Activated CD4-positive, alpha-beta memory T cell treated with anti-CD3 and anti-CD28 coated beads, Interleukin-2, amount 10 ng/mL, durations not matched to agents 7 days and 5 days (primary cell): ENCODE measurements at regions of chr6 and their contacts with region 1.

Region 1: GRCh38 chr6:143842902-143843676 is at the start of gene LTV1:
- DNase-seq: peak; percentile 94
- H3K4me3 Mint-ChIP-seq: peak within 1 kb of the TSS; percentile 90
- H3K27ac Mint-ChIP-seq: peak within 1 kb of the TSS; percentile 91
- H3K4me1 Mint-ChIP-seq: peaks cover 20% of the 10 kb centered on the region
- H3K27me3 Mint-ChIP-seq: no peaks in the 10 kb centered on the region
- total RNA-seq, gene LTV1: 18.3 to 18.8 TPM

Region 2: DNA sequence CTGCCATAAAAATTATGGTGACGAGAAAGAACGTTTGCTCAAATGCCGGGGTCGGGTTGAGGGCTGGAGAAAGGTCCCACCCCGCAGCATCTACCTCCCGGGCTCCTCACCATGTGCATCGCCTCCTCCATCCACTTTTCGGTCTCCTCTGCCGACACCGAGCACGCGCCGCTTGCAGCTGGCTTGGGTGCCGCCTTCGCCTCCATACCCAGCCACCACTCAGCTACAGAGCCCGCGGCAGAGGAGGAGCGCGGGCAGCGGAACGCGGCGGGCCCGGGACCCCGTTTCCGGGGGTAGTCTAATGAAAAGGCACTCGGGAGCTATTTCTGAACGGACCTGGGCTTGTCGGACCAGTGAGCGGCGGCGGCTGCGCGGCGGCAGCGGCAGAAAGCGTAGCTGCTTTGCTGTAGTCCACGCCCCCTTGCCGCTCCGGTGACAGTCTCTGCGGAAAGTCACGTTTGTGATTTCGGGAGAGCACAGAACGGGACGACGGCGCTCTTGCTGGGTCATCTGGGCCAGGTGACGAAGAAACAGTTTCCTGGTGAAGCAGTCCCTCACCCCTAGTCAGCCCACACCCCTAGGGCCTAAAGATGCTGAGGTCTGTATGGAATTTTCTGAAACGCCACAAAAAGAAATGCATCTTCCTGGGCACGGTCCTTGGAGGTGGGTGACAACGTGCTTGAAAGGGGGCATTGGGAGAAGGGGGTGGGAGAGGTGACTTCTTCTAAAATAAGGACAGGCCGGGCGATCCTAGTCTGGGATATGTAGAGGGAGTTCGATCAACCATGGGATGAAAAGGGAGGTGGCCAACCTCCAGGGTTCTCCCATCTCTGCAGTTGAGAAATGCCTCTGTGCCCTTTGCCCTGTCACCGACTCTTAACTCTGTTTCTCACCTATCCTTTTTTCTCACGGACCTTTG is 392.4 kb before region 1 on chr6 and contains the starts of genes ADAT2 and PEX3:
- CTCF ChIA-PET with region 1: interaction called, 4 read pairs
- POLR2A ChIA-PET with region 1: interaction called, 20 read pairs
- DNase-seq: peak; percentile 95
- H3K4me3 Mint-ChIP-seq: peak within 1 kb of the TSS; percentile 92
- H3K27ac Mint-ChIP-seq: peak within 1 kb of the TSS; percentile 92
- H3K4me1 Mint-ChIP-seq: peaks cover 40% of the 10 kb centered on the region
- H3K27me3 Mint-ChIP-seq: no peaks in the 10 kb centered on the region
- total RNA-seq, gene ADAT2: 19.4 to 20.1 TPM
- total RNA-seq, gene PEX3: 14.1 to 15.9 TPM

Region 3: DNA sequence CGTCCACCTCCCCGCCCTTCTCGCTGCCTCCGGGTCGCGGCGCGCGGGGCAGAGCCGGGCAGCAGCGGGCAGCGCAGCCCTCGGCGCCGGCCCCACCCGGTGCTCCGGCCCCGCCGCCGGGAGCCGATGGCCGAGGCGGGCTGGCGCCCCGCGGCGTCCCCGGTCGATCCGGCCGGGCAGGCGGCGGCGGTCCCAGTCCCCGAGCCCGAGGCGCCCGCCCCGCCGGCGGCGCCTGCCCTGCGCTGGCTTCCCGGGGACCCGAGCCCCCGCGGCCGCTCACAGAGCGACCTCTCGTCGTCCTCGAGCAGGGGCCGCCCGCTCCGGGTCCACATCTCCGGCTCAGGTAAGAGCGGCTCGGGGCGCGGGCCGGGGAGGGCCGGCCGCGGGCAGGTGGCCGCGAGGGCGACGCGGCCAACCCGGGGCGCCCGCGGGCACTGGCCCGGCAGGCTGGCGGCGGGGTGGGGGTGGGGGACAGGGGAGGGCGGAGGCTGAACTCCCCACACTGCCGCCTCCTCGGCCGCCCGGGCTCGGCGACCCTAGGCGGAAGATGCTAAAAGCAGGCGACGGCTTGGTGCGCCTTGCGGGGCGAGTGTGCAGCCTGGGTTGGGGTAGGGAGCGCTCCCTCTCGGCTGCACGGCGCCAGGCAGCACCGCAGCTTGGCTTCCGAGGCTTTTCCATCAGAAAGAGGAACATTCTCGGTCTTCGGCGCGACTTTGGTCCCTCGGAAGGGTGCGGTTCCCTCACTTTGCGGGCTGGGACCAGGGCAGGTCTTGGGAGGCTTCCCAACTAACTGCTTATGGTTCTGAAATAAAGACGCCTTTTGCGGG is 306.0 kb before region 1 on chr6:
- CTCF ChIA-PET with region 1: interaction called, 6 read pairs
- POLR2A ChIA-PET with region 1: interaction called, 13 read pairs
- DNase-seq: peak; percentile 71
- H3K4me3 Mint-ChIP-seq: peak overlapping the region; percentile 77
- H3K27ac Mint-ChIP-seq: peak overlapping the region; percentile 89
- H3K4me1 Mint-ChIP-seq: peaks cover 46% of the 10 kb centered on the region
- H3K27me3 Mint-ChIP-seq: no peaks in the 10 kb centered on the region

Region 4: GRCh38 chr6:143575440-143575839 is 267.6 kb before region 1 on chr6:
- CTCF ChIA-PET with region 1: interaction called, 21 read pairs
- POLR2A ChIA-PET with region 1: interaction called, 7 read pairs
- DNase-seq: peak; percentile 50
- H3K4me3 Mint-ChIP-seq: no peak overlapping the region
- H3K27ac Mint-ChIP-seq: no peak overlapping the region
- H3K4me1 Mint-ChIP-seq: peaks cover 1% of the 10 kb centered on the region
- H3K27me3 Mint-ChIP-seq: peaks cover 3% of the 10 kb centered on the region

Region 5: GRCh38 chr6:143817621-143818020 is 25.5 kb before region 1 on chr6:
- CTCF ChIA-PET with region 1: no interaction called
- POLR2A ChIA-PET with region 1: no interaction called
- DNase-seq: no peak
- H3K4me3 Mint-ChIP-seq: no peak overlapping the region
- H3K27ac Mint-ChIP-seq: no peak overlapping the region
- H3K4me1 Mint-ChIP-seq: no peaks in the 10 kb centered on the region
- H3K27me3 Mint-ChIP-seq: no peaks in the 10 kb centered on the region

Region 6: DNA sequence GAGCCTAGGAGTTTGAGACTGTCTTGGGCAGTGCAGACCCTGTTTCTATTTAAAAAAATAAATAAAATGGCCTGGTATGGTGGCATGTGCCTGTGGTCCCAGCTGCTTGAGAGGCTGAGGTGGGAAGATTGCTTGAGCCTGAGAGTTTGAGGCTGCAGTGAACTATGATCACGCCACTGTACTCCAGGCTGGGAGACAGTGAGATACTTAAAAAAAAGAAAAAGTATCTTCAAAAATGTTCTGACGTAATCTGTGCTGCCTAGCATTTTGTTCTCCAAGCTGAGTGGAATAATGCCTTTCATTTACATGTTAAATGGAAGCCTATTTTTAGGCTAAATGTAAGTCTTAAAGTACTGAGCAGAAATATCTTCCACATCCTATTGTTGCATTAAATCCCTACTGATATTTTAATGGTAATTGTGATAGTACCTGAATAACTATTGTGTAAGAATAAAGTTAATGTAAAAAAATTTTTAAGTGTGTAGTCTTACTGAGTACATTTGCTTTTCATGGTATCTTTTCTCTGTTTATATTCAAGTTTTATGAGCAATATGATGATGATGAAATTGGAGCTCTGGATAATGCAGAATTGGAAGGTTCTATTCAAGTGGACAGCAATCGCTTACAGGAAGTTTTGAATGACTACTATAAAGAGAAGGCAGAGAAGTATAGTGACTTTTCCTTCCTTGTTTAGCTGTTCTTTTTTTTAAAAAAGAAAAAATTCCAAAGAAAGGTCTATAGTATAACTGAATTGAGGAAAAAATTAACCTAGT is 17.0 kb after region 1 on chr6:
- CTCF ChIA-PET with region 1: interaction called, 4 read pairs
- POLR2A ChIA-PET with region 1: interaction called, 20 read pairs
- DNase-seq: no peak
- H3K4me3 Mint-ChIP-seq: no peak overlapping the region
- H3K27ac Mint-ChIP-seq: no peak overlapping the region
- H3K4me1 Mint-ChIP-seq: no peaks in the 10 kb centered on the region
- H3K27me3 Mint-ChIP-seq: no peaks in the 10 kb centered on the region

Region 7: GRCh38 chr6:144055121-144055931 is 212.2 kb after region 1 on chr6:
- CTCF ChIA-PET with region 1: no interaction called
- POLR2A ChIA-PET with region 1: interaction called, 10 read pairs
- DNase-seq: peak; percentile 64
- H3K4me3 Mint-ChIP-seq: peak overlapping the region; percentile 69
- H3K27ac Mint-ChIP-seq: peak overlapping the region; percentile 82
- H3K4me1 Mint-ChIP-seq: peaks cover 32% of the 10 kb centered on the region
- H3K27me3 Mint-ChIP-seq: no peaks in the 10 kb centered on the region